Activated CD4-positive, alpha-beta T cell treated with anti-CD3 and anti-CD28 coated beads for 36 hours (primary cell): ENCODE measurements at regions of chr22 and their contacts with region 1.

Region 1: GRCh38 chr22:22959147-22959827 is 71.7 kb downstream of the IGLL5 start:
- DNase-seq: peak; percentile 85
- ATAC-seq: peak; percentile 70
- H3K4me3 Mint-ChIP-seq: no peak overlapping the region
- H3K27ac Mint-ChIP-seq: no peak overlapping the region
- H3K4me1 Mint-ChIP-seq: peaks cover 3% of the 10 kb centered on the region
- H3K27me3 Mint-ChIP-seq: peaks cover 24% of the 10 kb centered on the region

Region 2: GRCh38 chr22:22463855-22464540 is 495.3 kb before region 1 on chr22:
- CTCF ChIA-PET with region 1: interaction called, 4 read pairs
- POLR2A ChIA-PET with region 1: no interaction called
- intact Hi-C with region 1: loop called (anchors 10 kb)
- DNase-seq: peak; percentile 71
- ATAC-seq: no peak
- H3K4me3 Mint-ChIP-seq: no peak overlapping the region
- H3K27ac Mint-ChIP-seq: no peak overlapping the region
- H3K4me1 Mint-ChIP-seq: no peaks in the 10 kb centered on the region
- H3K27me3 Mint-ChIP-seq: peaks cover 33% of the 10 kb centered on the region

Region 3: DNA sequence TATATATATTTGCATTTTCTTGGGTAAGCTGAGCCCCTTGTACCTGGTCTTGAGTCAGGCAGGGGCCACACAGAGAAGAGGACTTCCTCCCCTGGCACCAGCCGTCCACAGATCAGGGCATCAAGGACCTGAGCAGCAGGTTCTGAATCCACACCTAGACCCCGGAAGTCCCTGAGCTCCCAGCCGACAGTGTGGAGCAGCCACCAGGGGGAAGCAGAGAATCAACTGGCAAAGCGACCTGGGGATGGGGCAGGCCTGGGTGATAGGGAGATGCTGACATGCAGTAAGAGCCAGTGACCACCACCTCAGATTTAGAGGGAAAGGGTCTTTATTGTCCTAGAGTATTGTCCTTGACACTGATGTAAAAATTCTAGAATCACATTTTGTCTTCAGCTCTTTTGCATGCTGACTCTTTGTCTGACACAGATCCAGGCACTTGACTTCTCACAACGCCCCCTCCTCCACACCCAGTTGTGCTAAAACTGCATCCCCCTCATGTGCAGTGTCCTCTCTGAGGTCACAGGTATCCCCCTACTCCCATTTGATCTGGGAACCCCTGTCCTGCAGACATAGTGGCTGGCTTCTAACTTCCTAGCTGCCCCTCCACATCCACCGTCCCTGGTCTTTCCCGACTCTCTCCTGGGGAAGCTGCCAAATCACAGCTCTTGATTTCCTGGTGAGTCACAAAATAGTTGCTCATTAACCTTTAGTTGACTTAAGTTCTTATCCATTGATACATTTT is 205.6 kb before region 1 on chr22:
- CTCF ChIA-PET with region 1: interaction called, 36 read pairs
- POLR2A ChIA-PET with region 1: no interaction called
- intact Hi-C with region 1: loop called (anchors 1 to 2 kb)
- DNase-seq: peak; percentile 89
- ATAC-seq: peak; percentile 99
- H3K4me3 Mint-ChIP-seq: no peak overlapping the region
- H3K27ac Mint-ChIP-seq: peak overlapping the region; percentile 58
- H3K4me1 Mint-ChIP-seq: peaks cover 34% of the 10 kb centered on the region
- H3K27me3 Mint-ChIP-seq: no peaks in the 10 kb centered on the region

Region 4: GRCh38 chr22:22802339-22802970 is 156.8 kb before region 1 on chr22:
- CTCF ChIA-PET with region 1: interaction called, 10 read pairs
- POLR2A ChIA-PET with region 1: no interaction called
- intact Hi-C with region 1: loop called in 1 of 2 experiments (anchors 1 kb)
- DNase-seq: peak; percentile 70
- ATAC-seq: peak; percentile 68
- H3K4me3 Mint-ChIP-seq: no peak overlapping the region
- H3K27ac Mint-ChIP-seq: no peak overlapping the region
- H3K4me1 Mint-ChIP-seq: peaks cover 38% of the 10 kb centered on the region
- H3K27me3 Mint-ChIP-seq: no peaks in the 10 kb centered on the region

Region 5: DNA sequence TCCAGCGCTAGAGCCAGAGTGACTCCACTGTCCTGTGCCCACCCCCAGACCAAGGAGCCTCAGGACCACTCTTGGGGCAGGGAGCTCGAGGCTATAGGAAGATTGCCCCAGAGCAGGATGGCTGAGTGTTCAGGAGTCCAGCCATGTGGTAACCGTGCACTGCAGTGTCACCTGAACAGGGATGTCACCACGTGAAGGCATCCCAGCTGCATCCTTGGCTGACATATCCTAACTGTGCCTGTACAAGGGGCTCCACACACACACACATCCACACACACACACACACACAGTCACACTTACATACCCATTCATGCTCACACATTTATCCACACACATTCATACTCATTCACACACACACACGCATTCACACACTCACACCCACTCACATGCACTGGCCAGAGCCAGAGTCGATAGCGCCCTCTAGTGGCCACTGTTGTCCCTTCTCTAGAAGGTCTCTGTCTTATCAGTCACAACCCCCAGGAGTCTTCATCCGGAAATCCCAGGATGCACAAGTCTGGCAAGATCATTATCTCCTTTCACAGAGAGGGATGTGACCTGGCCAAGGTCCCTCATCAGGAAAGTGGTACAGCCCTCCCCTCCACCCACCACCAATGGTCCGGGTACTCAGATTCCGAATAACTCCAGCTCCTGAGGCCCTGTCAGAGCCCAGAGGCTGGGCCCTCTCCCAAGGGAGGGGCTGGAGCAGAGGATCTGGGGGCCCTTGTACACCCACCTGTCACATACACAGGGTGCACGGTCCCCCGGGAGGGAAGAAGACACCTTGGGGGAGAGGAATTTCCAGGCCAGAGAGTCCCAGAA is 16.6 kb before region 1 on chr22:
- CTCF ChIA-PET with region 1: interaction called, 10 read pairs
- POLR2A ChIA-PET with region 1: no interaction called
- intact Hi-C with region 1: no loop called
- DNase-seq: peak; percentile 92
- ATAC-seq: peak; percentile 90
- H3K4me3 Mint-ChIP-seq: no peak overlapping the region
- H3K27ac Mint-ChIP-seq: no peak overlapping the region
- H3K4me1 Mint-ChIP-seq: peaks cover 2% of the 10 kb centered on the region
- H3K27me3 Mint-ChIP-seq: no peaks in the 10 kb centered on the region

Region 6: GRCh38 chr22:23084453-23085350 is 125.4 kb after region 1 on chr22:
- CTCF ChIA-PET with region 1: no interaction called
- POLR2A ChIA-PET with region 1: no interaction called
- intact Hi-C with region 1: no loop called
- DNase-seq: no peak
- ATAC-seq: no peak
- H3K4me3 Mint-ChIP-seq: no peak overlapping the region
- H3K27ac Mint-ChIP-seq: no peak overlapping the region
- H3K4me1 Mint-ChIP-seq: peaks cover 3% of the 10 kb centered on the region
- H3K27me3 Mint-ChIP-seq: no peaks in the 10 kb centered on the region

Region 7: DNA sequence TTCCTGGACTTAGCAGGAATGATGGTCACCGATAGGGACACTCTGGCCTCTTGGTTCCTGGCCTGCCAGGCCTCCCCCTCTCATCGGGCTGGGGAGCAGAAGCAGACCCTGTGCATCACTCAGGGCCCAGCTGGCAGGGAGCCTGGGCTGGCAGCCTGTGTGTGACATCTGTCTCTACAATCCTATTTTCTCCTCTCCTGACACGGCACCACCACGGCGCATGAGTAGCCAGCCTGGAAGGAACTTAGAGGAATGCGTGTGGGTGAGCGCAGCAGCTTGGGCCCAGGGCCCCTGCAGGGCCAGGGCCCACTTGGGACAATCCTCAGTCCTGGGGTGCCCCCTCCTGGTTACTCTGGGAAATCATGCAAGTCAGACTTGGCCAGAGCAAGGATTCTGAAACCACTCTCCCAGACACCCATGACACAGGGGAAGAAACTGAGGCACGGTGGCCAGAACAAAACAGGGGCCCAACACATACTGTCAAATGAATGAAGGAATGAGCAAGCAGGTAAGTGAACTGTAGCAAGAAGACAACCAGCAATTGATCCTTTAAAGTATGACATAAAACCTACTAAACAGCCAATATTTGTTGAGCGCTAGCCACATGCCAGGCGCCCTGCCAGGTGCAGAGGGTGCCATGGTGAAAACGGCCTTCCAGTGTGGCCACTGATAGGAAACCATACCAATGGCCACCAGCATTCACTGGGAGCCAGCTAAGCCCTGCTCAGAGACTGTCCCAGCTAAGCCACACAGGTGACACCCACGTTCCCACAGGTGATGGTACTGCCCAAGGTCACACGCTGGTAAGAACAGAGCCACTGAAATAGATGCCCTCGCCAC is 169.2 kb after region 1 on chr22:
- CTCF ChIA-PET with region 1: interaction called, 118 read pairs
- POLR2A ChIA-PET with region 1: no interaction called
- intact Hi-C with region 1: loop called (anchors 1 kb)
- DNase-seq: peak; percentile 84
- ATAC-seq: peak; percentile 92
- H3K4me3 Mint-ChIP-seq: no peak overlapping the region
- H3K27ac Mint-ChIP-seq: no peak overlapping the region
- H3K4me1 Mint-ChIP-seq: no peaks in the 10 kb centered on the region
- H3K27me3 Mint-ChIP-seq: no peaks in the 10 kb centered on the region